ENCODE measurements at regions of chr2 and their contacts with region 1.

Region 1: GRCh38 chr2:230712443-230713330 is at the start of gene CAB39:
- DNase-seq: peak; percentile 95
- ATAC-seq: peak; percentile 91
- H3K4me3 Mint-ChIP-seq: peak within 1 kb of the TSS; percentile 94
- H3K27ac Mint-ChIP-seq: peak within 1 kb of the TSS; percentile 93
- H3K4me1 Mint-ChIP-seq: peaks cover 48% of the 10 kb centered on the region
- H3K27me3 Mint-ChIP-seq: no peaks in the 10 kb centered on the region
- CTCF ChIP-seq: no peak
- total RNA-seq, gene CAB39: 60.1 and 68.6 TPM in 2 replicates

Region 2: DNA sequence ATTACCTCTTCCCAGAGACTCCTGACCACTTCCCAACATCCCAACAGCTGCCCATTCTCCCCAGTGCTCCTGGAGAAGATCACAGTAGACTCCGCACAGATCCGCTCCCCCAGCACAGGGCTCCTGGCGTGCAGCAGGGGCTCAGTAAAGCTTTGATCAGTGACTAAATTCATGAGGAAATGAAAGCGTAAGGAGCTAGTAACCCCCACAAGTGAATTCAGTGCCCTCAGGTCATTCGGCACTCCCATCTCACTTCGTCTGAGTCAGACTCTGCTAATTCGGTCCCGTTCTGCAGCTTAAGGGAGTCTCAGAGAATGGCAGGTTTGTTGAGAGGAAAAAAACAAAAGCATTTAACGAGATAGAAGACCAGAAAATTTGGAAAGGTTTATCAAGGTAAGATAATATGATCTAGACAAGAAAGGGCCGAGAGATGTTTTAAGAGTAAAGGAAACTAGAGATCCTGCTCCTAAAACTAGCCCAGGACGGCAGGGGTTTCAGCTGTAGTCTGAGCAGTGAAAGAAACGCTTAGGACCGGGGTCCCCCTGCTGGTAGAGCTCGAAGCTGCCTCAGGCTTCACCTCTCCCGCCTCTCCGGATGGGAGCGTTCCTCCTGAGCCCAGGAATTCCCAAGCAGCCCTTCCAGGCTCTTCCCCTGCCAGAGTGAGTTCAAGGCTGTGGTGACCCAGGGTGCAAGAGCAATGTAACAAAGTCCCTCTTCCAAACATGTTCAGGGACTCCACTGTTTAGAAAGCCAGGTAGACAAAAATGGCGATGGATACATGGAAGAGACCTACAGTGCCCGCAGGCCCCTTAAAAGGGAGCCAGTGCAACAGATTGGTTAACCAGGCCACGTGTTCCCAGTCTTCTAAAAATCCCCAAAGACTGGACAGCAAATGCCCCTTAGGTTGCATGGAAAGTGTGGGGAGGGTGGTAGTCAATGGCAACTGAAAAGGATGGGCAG is 1125.7 kb before region 1 on chr2:
- CTCF ChIA-PET with region 1: no interaction called
- POLR2A ChIA-PET with region 1: no interaction called
- intact Hi-C with region 1: no loop called
- DNase-seq: no peak
- ATAC-seq: no peak
- H3K4me3 Mint-ChIP-seq: no peak overlapping the region
- H3K27ac Mint-ChIP-seq: no peak overlapping the region
- H3K4me1 Mint-ChIP-seq: no peaks in the 10 kb centered on the region
- H3K27me3 Mint-ChIP-seq: peaks cover 22% of the 10 kb centered on the region
- CTCF ChIP-seq: no peak

Region 3: DNA sequence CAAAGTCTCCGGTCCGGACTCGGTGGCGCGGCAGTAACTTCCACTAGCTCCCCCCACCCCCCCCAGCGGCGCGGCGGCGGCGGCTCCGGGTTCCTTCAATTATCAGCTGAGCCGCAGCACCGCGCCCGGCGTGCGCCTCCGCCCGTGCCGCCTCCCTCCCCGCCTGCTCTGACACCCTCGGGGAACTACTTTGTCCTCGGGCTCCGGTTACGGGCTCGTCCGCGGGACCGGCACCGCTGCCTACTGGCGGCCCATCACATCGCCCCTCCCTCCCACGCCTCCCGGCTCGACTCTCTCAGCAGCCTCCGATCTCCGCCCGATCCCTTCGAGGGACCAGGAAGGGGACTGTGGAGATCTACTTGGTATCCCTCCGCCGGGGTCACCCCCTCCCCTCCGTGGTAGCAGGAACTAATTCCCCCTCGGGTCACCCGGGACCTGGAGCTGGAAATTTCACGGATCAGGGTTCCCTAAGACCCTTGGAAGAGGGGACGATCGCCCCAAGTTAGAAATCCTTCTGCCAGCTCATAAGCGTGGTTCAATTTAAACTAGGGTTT is 790.7 kb before region 1 on chr2 and contains the start of gene TRIP12:
- CTCF ChIA-PET with region 1: no interaction called
- POLR2A ChIA-PET with region 1: no interaction called
- intact Hi-C with region 1: loop called (anchors 2 kb)
- DNase-seq: peak; percentile 94
- ATAC-seq: peak; percentile 76
- H3K4me3 Mint-ChIP-seq: peak within 1 kb of the TSS; percentile 94
- H3K27ac Mint-ChIP-seq: peak within 1 kb of the TSS; percentile 96
- H3K4me1 Mint-ChIP-seq: peaks cover 42% of the 10 kb centered on the region
- H3K27me3 Mint-ChIP-seq: no peaks in the 10 kb centered on the region
- CTCF ChIP-seq: no peak
- total RNA-seq, gene TRIP12: 255 and 272 TPM in 2 replicates

Region 4: DNA sequence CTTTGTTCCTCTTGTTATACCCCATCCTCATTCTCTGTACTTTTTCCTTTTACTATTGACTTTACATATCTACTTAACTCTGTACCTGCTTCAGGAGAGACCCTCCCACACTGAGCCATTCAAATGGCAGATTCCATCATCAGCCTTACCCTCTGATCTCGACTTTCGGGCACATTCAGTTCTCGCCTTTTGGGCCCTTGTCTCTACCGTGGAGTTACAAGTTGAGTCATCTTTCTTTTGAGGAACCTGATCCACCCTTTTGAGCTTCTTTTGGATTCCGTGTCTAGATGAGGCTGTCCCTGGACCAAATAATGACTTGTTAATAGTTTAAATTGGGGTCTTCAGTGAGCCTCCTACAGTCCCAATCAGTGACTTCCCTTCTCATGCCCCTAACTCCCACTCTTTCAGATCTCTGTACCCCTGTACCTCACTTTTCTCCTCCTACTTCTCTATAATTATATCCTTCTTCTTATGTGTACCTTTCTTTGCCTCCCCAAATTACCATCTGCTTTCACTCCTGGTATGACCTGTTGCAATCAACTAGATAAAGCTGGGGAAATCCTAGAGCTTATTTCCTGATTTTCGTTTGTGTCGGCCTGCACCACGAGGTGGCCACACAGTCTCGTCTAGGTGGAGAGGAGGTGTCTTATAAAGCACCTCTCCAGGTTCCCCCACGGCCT is 510.1 kb before region 1 on chr2:
- CTCF ChIA-PET with region 1: interaction called, 3 read pairs
- POLR2A ChIA-PET with region 1: interaction called, 3 read pairs
- intact Hi-C with region 1: loop called (anchors 2 kb)
- DNase-seq: peak; percentile 39
- ATAC-seq: peak; percentile 70
- H3K4me3 Mint-ChIP-seq: peak overlapping the region; percentile 76
- H3K27ac Mint-ChIP-seq: peak overlapping the region; percentile 87
- H3K4me1 Mint-ChIP-seq: peaks cover 42% of the 10 kb centered on the region
- H3K27me3 Mint-ChIP-seq: no peaks in the 10 kb centered on the region
- CTCF ChIP-seq: no peak

Region 5: GRCh38 chr2:230326453-230327417 is 386.0 kb before region 1 on chr2 and contains the start of gene SP140L:
- CTCF ChIA-PET with region 1: no interaction called
- POLR2A ChIA-PET with region 1: no interaction called
- intact Hi-C with region 1: loop called (anchors 2 kb)
- DNase-seq: peak; percentile 60
- ATAC-seq: peak; percentile 95
- H3K4me3 Mint-ChIP-seq: peak within 1 kb of the TSS; percentile 96
- H3K27ac Mint-ChIP-seq: peak within 1 kb of the TSS; percentile 99
- H3K4me1 Mint-ChIP-seq: peaks cover 79% of the 10 kb centered on the region
- H3K27me3 Mint-ChIP-seq: no peaks in the 10 kb centered on the region
- CTCF ChIP-seq: no peak
- total RNA-seq, gene SP140L: 106 and 112 TPM in 2 replicates

Region 6: GRCh38 chr2:230658877-230659652 is 53.6 kb before region 1 on chr2:
- CTCF ChIA-PET with region 1: interaction called, 5 read pairs
- POLR2A ChIA-PET with region 1: interaction called, 27 read pairs
- intact Hi-C with region 1: loop called (anchors 2 kb)
- DNase-seq: no peak
- ATAC-seq: peak; percentile 20
- H3K4me3 Mint-ChIP-seq: peak overlapping the region; percentile 5
- H3K27ac Mint-ChIP-seq: peak overlapping the region; percentile 42
- H3K4me1 Mint-ChIP-seq: peaks cover 74% of the 10 kb centered on the region
- H3K27me3 Mint-ChIP-seq: no peaks in the 10 kb centered on the region
- CTCF ChIP-seq: no peak

Region 7: GRCh38 chr2:230694241-230694640 is 18.4 kb before region 1 on chr2:
- CTCF ChIA-PET with region 1: no interaction called
- POLR2A ChIA-PET with region 1: no interaction called
- intact Hi-C with region 1: no loop called
- DNase-seq: no peak
- ATAC-seq: no peak
- H3K4me3 Mint-ChIP-seq: no peak overlapping the region
- H3K27ac Mint-ChIP-seq: no peak overlapping the region
- H3K4me1 Mint-ChIP-seq: no peaks in the 10 kb centered on the region
- H3K27me3 Mint-ChIP-seq: no peaks in the 10 kb centered on the region
- CTCF ChIP-seq: no peak

Region 8: DNA sequence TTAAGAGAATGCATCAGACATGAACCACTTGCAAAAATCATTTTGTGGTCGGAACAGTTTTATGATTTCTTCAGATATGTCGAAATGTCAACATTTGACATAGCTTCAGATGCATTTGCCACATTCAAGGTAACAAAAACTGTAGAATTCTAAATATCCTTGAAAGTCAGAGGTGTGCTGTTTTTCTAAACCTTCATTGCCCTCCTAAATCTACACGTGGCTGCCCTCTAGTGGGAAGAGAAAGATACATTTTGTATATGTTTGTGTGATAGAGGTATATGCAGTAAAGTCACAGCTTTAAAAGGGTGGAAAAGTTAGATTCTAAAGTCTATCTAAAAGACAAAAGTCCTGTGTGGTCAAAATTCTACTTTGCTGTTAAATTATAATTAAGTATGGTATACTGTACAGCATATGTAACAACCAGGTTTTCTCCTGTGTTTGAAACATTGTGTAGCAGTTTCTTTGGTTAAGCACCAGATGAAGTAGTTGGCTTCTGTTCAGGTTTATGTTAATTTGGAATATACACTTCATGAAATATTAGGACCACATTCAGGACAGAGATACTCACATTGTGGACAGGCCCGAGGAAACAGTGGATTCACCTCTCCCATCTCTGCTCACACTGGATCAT is 86.2 kb after region 1 on chr2:
- CTCF ChIA-PET with region 1: interaction called, 12 read pairs
- POLR2A ChIA-PET with region 1: interaction called, 13 read pairs
- intact Hi-C with region 1: loop called (anchors 1 kb)
- DNase-seq: no peak
- ATAC-seq: peak; percentile 46
- H3K4me3 Mint-ChIP-seq: no peak overlapping the region
- H3K27ac Mint-ChIP-seq: no peak overlapping the region
- H3K4me1 Mint-ChIP-seq: peaks cover 14% of the 10 kb centered on the region
- H3K27me3 Mint-ChIP-seq: no peaks in the 10 kb centered on the region
- CTCF ChIP-seq: no peak

Measured in activated B cell treated with CpG ODN at 0.5 μM for 24 hours (primary cell).